Activated T-helper 1 cell treated with anti-CD3 and anti-CD28 coated beads, Interleukin-12 subunit alpha, Interleukin-12 subunit beta, Interleukin-2, Interleukin-4 antibody, amounts not matched to agents 30 ng/mL and 10 ng/mL and 1 ng/mL, durations not matched to agents 14 hours and 24 hours and 36 hours (primary cell): ENCODE measurements at regions of chr10 and their contacts with region 1.

Region 1: GRCh38 chr10:100827819-100828737 is 82.7 kb downstream of the PAX2 start:
- DNase-seq: peak; percentile 19
- H3K4me3 Mint-ChIP-seq: peak overlapping the region; percentile 70
- H3K27ac Mint-ChIP-seq: no peak overlapping the region
- H3K4me1 Mint-ChIP-seq: peaks cover 11% of the 10 kb centered on the region
- H3K27me3 Mint-ChIP-seq: peaks cover 83% of the 10 kb centered on the region

Region 2: DNA sequence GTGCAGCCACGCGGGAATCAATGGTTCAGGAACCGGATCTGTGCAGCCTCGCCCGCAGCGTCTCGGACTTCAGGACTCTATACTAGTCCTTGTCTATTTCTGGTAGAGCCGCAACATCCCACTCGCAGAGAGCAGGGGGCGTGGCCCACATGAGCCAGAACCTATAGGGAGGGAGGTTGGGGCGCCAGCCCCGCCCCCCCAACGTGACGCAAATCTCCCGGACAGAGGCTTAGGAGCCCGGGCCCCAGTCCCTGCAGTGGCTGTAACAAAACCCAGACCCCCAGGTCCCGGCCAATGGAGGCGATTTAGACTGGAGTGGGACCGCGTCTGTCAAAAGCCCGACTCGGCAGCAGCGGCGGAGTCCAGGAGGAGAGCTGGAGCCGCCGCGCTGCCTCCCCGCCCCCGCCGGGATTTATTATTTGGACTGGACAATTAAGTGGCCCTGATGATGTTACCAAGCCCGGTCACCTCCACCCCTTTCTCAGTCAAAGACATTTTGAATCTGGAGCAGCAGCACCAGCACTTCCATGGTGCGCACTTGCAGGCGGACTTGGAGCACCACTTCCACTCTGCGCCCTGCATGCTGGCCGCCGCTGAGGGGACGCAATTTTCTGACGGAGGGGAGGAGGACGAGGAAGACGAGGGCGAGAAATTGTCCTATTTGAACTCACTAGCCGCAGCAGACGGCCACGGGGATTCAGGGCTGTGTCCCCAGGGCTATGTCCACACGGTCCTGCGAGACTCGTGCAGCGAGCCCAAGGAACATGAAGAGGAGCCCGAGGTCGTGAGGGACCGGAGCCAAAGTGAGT is 1295.2 kb before region 1 on chr10 and contains the start of gene NKX2-3:
- intact Hi-C with region 1: loop called (anchors 10 kb)
- DNase-seq: peak; percentile 6
- H3K4me3 Mint-ChIP-seq: peak within 1 kb of the TSS; percentile 22
- H3K27ac Mint-ChIP-seq: peak within 1 kb of the TSS; percentile 73
- H3K4me1 Mint-ChIP-seq: peaks cover 47% of the 10 kb centered on the region
- H3K27me3 Mint-ChIP-seq: peaks cover 87% of the 10 kb centered on the region
- total RNA-seq, gene NKX2-3: not detected in 2 replicates

Region 3: GRCh38 chr10:100562008-100562711 is 265.9 kb before region 1 on chr10:
- intact Hi-C with region 1: loop called (anchors 2 kb)
- DNase-seq: peak; percentile 72
- H3K4me3 Mint-ChIP-seq: no peak overlapping the region
- H3K27ac Mint-ChIP-seq: no peak overlapping the region
- H3K4me1 Mint-ChIP-seq: peaks cover 6% of the 10 kb centered on the region
- H3K27me3 Mint-ChIP-seq: peaks cover 34% of the 10 kb centered on the region

Region 4: DNA sequence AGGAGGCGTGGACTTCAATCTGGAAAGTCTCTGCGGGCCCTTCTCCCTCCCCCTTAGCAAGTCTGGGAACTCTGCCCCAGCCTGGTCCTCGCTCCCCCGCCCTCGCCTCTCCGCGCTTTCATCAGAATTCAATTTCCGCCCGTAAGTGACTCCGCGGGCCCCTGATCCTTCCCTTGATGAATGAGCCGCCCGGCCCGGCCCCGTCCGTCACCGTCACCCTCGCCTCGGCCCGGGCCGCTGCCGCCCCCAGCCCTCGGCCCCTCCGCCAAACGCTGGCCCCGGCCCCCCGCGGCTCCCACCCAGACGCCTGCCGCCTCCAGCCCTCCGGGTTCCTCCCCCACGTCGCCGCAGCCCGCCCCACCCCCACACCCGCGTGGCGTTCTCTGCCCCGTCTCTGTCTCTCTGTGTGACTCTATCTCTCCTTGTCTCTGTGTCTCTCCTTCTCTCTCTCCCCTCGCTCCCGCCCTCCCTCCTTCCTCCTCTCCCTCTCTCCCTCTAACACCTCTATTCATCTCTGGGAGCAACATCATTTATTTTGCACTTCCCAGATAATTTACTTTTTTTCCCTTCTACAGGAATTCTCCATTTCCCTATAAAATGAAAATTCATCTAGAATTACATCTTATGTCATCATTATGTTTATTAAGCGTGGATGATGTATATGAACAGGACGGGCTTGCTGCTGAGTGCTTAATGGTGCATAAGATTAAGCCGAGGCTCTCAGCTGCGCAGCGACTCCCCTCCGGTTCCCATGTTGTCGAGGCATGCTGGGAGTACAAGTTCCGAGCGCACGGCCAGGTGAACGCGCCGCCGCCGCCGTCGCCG is 173.9 kb before region 1 on chr10:
- intact Hi-C with region 1: loop called (anchors 10 kb)
- DNase-seq: no peak
- H3K4me3 Mint-ChIP-seq: peak overlapping the region; percentile 57
- H3K27ac Mint-ChIP-seq: no peak overlapping the region
- H3K4me1 Mint-ChIP-seq: peaks cover 20% of the 10 kb centered on the region
- H3K27me3 Mint-ChIP-seq: peaks cover 63% of the 10 kb centered on the region

Region 5: DNA sequence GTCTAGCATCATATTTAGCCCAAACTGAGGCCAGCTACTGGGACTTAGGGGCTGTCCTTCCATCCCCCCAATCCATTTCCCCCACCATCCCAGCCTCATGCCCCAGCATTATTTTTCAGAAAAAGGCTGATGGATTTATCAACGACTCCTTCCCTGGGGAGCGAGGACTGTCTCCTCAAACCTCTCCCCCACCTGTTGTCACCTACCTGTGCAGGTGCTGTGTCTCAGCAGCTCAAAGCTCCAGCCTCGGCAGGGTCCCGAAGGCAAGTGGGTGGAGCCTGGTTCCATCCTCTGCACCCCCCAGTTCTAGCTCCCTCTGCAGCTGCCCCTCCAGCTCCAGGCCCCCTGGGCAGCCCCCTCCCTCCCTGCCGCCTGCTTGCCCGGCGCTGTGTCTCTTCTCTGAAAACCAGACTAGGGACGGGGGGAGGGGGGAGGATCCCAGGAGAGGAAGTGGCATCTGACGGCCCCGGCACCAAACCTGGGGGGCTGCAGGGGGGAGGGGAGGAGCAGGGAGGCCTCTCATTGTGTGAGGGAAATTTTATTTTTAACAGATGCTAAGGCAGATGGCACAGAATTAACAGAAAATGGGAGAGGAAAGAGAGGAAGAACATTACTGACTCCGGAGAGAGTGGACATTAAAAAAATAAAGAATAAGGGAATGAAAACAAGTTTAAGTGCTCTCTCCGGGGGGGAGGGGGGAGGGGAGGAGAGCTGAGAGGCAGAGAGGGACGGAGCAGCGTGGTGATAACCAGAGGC is 144.4 kb before region 1 on chr10:
- intact Hi-C with region 1: loop called (anchors 5 kb)
- DNase-seq: no peak
- H3K4me3 Mint-ChIP-seq: no peak overlapping the region
- H3K27ac Mint-ChIP-seq: no peak overlapping the region
- H3K4me1 Mint-ChIP-seq: no peaks in the 10 kb centered on the region
- H3K27me3 Mint-ChIP-seq: peaks cover 89% of the 10 kb centered on the region

Region 6: GRCh38 chr10:100847440-100847839 is 19.4 kb after region 1 on chr10:
- intact Hi-C with region 1: loop called (anchors 2 kb)
- DNase-seq: no peak
- H3K4me3 Mint-ChIP-seq: no peak overlapping the region
- H3K27ac Mint-ChIP-seq: peak overlapping the region; percentile 13
- H3K4me1 Mint-ChIP-seq: peaks cover 11% of the 10 kb centered on the region
- H3K27me3 Mint-ChIP-seq: peaks cover 41% of the 10 kb centered on the region

Region 7: GRCh38 chr10:100864978-100865377 is 36.9 kb after region 1 on chr10:
- intact Hi-C with region 1: no loop called
- DNase-seq: no peak
- H3K4me3 Mint-ChIP-seq: no peak overlapping the region
- H3K27ac Mint-ChIP-seq: no peak overlapping the region
- H3K4me1 Mint-ChIP-seq: no peaks in the 10 kb centered on the region
- H3K27me3 Mint-ChIP-seq: peaks cover 24% of the 10 kb centered on the region

Region 8: GRCh38 chr10:100888796-100889356 is 60.8 kb after region 1 on chr10:
- intact Hi-C with region 1: no loop called
- DNase-seq: no peak
- H3K4me3 Mint-ChIP-seq: no peak overlapping the region
- H3K27ac Mint-ChIP-seq: no peak overlapping the region
- H3K4me1 Mint-ChIP-seq: no peaks in the 10 kb centered on the region
- H3K27me3 Mint-ChIP-seq: peaks cover 37% of the 10 kb centered on the region

Region 9: GRCh38 chr10:101228153-101228973 is 400.3 kb after region 1 on chr10:
- intact Hi-C with region 1: loop called (anchors 5 kb)
- DNase-seq: no peak
- H3K4me3 Mint-ChIP-seq: no peak overlapping the region
- H3K27ac Mint-ChIP-seq: peak overlapping the region; percentile 71
- H3K4me1 Mint-ChIP-seq: peaks cover 17% of the 10 kb centered on the region
- H3K27me3 Mint-ChIP-seq: peaks cover 76% of the 10 kb centered on the region